ENCODE measurements at regions of chr15 and their contacts with region 1.

Region 1: DNA sequence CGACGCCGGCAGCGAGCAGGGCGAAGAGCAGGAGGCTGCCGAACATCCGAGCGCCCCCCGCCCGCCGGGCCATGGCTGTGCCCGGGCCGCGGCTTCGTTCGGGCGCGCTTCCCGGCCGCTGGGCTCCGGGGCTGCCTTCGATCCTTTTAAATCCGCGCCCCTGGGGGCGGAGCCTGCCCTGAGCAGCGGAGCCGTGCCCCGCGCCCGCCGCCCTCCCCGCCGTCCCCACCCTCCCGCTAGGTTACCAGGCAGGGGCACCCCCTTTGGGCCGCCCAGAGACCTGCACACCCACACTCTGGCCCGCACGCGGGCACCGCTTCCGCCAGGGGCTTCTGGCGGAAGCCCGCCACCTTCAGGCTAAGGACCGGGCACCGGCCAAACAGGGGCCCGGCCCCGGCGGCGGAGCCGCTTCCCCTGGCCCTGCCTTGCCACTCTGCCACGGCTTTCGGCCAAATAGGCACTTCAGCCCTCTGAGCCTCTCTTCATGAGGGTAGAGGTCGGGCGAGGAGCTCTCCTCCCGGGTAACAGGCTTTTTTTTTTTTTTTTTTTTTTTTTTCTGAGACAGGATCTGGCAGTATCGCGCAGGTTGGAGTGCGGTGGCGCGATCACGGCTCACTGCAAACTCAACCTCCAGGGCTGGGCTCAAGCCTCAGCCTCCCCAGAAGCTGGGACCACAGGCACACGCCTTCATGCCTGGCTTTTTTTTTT is at the start of gene NMB:
- DNase-seq: peak; percentile 83
- H3K4me3 Mint-ChIP-seq: peak within 1 kb of the TSS; percentile 70
- H3K27ac Mint-ChIP-seq: no peak within 1 kb of the TSS
- H3K4me1 Mint-ChIP-seq: peaks cover 28% of the 10 kb centered on the region
- H3K27me3 Mint-ChIP-seq: no peaks in the 10 kb centered on the region
- total RNA-seq, gene NMB: 5.1 to 5.7 TPM

Region 2: DNA sequence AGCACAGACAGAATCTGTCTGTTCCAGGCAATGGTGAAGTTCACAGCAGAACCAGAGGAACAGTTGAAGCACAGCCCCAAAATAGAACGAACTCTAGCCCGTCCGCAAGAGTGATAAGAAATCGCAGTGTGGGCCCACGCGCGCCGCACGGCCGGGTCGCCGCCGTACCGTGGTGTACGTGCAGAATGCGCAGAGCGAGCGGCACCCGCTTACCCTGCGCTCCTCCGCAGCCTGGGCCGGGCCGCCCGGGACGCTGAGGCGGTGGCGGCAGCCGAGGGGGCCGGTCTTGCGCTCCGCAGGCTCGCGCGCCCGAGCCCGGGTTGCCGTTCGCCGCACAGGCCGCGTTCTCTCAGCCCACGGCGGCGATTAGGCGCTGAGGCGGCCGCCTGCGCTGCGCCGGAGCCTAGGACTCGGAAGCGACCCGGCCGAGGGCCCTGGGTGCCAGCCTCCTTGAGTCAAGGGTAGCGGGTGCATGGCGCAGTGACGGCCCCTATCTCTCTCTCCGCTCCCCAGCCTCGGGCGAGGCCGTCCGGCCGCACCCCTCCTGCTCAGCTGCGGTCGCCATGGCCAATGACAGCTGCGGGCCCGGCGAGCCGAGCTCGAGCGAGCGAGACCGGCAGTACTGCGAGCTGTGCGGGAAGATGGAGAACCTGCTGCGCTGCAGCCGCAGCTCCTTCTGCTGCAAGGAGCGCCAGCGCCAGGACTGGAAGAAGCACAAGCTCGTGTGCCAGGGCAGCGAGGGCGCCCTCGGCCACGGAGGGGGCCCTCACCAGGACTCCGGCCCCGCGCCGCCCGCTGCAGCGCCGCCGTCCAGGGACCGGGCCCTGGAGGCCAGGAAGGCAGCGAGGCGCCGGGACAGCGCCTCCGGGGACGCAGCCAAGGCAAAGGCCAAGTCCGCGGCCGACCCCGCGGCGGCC is 24.7 kb before region 1 on chr15:
- CTCF ChIA-PET with region 1: interaction called, 12 read pairs
- intact Hi-C with region 1: loop called (anchors 1 kb)
- DNase-seq: peak; percentile 63
- H3K4me3 Mint-ChIP-seq: peak overlapping the region; percentile 94
- H3K27ac Mint-ChIP-seq: peak overlapping the region; percentile 93
- H3K4me1 Mint-ChIP-seq: peaks cover 46% of the 10 kb centered on the region
- H3K27me3 Mint-ChIP-seq: no peaks in the 10 kb centered on the region

Region 3: DNA sequence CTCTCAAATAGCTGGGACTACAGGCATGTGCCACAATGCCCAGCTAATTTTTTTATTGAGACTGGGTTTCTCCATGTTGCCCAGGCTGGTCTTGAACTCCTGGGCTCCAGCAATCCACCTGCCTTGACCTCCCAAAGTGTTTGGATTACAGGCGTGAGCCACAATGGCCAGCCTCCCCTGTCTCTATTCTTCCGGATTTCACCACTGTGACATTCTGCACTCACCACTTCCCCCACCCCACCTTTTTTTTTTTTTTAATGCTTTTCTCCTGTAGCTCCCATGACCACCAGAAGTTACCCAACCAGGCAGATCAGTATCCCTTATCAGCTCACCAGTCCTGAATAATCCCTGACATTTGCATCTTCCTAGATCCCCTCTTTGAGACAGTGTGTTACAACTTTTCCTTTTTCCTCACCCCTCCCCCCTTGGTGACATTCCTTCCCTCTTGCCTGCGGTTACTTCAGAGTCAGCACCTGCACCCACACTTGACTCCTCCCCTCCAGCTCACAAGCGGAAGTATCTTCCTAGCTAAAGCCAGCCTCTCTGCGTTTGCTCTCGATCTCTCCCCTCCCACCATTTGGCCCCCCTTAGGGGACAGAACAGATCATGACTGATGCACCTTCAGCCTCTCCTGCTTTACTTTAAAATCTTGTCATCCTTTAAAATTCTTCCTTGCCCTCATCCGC is 76.7 kb after region 1 on chr15:
- CTCF ChIA-PET with region 1: interaction called, 3 read pairs
- intact Hi-C with region 1: loop called (anchors 1 kb)
- DNase-seq: peak; percentile 90
- H3K4me3 Mint-ChIP-seq: peak overlapping the region; percentile 73
- H3K27ac Mint-ChIP-seq: peak overlapping the region; percentile 95
- H3K4me1 Mint-ChIP-seq: peaks cover 49% of the 10 kb centered on the region
- H3K27me3 Mint-ChIP-seq: no peaks in the 10 kb centered on the region

Region 4: DNA sequence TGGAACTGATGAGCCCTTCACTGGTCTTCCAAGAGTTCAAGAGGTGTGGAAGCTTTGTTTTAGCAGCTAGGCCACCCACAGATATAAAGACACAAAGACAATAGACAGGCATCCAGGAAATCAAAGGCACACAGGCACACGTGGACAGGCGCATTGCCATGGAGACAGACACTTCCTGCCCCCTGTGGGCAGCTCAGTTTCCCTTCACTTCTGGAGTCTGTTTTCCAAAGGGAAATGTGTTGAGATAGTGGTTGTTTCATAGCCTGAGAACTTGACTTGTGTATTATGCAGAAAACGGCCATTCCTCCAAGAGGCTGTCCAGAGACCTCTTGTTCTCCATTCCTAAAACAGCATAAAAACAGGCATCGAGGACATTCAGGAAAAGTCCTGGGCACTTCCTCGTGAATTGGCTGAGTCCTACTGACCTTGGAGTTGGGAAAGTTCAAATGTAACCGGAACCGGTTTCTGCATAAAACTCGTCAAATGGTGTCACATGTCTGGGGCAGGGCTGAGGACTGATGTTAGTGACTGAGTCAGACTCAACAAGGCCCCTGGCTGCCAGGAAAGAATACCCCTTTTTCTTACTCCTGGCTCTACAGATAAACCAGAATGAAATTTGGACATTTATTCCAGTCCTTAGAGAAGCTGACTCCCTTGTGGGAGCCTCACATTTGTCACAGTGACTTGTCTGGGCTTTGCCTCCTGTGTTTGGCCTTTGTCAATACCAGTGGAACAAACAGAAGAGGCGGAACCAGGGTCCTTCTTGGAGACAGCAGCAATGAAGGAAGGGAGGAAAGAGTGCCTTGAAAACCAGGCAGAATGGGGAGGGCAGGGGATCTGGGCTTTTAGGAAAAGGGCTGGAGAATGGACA is 160.3 kb after region 1 on chr15:
- CTCF ChIA-PET with region 1: interaction called, 3 read pairs
- intact Hi-C with region 1: loop called (anchors 1 kb)
- DNase-seq: peak; percentile 40
- H3K4me3 Mint-ChIP-seq: no peak overlapping the region
- H3K27ac Mint-ChIP-seq: no peak overlapping the region
- H3K4me1 Mint-ChIP-seq: peaks cover 8% of the 10 kb centered on the region
- H3K27me3 Mint-ChIP-seq: peaks cover 14% of the 10 kb centered on the region

Region 5: DNA sequence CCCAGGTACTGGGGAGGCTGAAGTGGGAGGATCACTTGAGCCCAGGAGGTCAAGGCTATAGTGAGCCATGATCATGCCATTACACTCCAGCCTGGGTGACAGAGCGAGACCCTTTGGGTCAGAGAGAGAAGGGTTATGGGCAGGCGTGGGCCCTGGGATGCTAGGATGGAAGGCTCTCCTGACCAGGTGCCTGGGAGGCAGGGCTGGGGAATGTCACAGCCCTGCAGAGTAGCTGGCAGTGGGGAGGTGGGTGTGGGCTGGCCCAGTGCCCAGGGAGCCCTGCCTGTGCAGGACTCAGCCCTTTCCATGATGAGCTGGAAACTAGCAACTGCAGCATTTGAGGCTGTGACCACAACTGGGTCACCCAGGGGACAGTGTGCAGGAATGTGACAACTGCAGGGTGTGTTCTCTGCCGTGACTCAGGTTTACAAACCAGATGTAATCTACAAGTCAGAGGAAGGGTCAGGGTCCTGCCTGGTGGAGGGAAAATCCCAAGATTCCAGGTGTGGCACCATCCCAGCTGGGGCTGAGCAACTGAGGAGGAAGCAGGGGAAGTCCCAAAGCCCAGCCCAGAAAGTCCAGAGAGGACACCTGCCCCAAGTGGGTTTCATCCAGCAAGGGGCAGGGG is 271.6 kb after region 1 on chr15:
- CTCF ChIA-PET with region 1: interaction called, 4 read pairs
- intact Hi-C with region 1: loop called (anchors 1 kb)
- DNase-seq: no peak
- H3K4me3 Mint-ChIP-seq: no peak overlapping the region
- H3K27ac Mint-ChIP-seq: no peak overlapping the region
- H3K4me1 Mint-ChIP-seq: peaks cover 6% of the 10 kb centered on the region
- H3K27me3 Mint-ChIP-seq: no peaks in the 10 kb centered on the region

Region 6: DNA sequence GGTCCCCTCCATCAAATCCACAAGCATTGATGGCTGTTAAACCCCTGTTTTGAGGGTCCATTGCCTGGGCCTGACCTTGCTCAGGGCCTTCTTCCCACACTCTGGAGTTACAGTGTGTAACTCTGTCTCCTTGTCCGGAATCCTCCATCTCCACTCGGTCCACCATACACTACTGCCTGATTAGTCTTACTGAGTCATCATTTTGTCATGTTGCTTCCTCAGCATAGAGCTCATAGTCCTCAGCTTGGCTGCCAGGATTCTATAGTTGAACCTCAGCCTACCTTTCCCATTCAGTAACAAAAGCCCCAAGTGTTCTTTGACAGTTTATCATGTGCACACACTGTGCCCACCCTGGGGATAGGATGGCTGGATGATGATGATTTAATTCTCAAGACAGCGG is 436.5 kb after region 1 on chr15:
- CTCF ChIA-PET with region 1: no interaction called
- intact Hi-C with region 1: no loop called
- DNase-seq: no peak
- H3K4me3 Mint-ChIP-seq: no peak overlapping the region
- H3K27ac Mint-ChIP-seq: no peak overlapping the region
- H3K4me1 Mint-ChIP-seq: no peaks in the 10 kb centered on the region
- H3K27me3 Mint-ChIP-seq: no peaks in the 10 kb centered on the region

Measured in activated naive CD4-positive, alpha-beta T cell treated with anti-CD3 and anti-CD28 coated beads for 36 hours (primary cell).